ENCODE measurements at regions of chr4 and their contacts with region 1.

Region 1: DNA sequence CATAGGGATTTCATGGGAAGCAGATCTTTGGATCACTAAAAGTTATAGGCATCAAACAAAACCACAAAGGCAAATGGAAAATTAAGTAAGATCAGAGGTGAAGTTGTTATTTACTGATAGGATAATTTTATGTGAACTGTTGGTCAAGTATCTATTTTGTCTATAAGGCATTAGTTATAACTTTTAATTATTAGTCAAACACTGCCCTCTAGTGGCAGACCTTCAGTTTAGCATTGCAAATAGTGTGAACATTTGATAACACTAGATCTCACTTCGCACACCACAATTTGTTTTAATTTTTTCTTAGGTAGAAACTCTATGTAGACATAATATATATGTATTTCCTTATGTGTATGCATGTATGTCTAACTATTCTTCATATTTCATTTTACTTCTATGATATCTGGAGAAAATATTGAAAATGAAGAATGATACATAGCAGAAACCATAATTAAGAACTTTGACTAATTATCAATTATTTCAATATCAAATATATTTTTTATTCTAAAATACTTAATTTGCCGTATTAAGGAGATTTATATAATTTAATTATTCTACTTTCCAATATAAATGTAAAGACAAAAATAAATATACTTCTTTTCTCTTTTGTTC is 214.5 kb upstream of the TACR3 start:
- DNase-seq: peak; percentile 51
- CTCF ChIP-seq: peak; percentile 63

Region 2: GRCh38 chr4:103923551-103923950 is 10.7 kb before region 1 on chr4:
- CTCF ChIA-PET with region 1: interaction called, 10 read pairs
- POLR2A ChIA-PET with region 1: no interaction called
- DNase-seq: no peak
- CTCF ChIP-seq: no peak